CD14-positive monocyte (primary cell): ENCODE measurements at regions of chr5 and their contacts with region 1.

Region 1: DNA sequence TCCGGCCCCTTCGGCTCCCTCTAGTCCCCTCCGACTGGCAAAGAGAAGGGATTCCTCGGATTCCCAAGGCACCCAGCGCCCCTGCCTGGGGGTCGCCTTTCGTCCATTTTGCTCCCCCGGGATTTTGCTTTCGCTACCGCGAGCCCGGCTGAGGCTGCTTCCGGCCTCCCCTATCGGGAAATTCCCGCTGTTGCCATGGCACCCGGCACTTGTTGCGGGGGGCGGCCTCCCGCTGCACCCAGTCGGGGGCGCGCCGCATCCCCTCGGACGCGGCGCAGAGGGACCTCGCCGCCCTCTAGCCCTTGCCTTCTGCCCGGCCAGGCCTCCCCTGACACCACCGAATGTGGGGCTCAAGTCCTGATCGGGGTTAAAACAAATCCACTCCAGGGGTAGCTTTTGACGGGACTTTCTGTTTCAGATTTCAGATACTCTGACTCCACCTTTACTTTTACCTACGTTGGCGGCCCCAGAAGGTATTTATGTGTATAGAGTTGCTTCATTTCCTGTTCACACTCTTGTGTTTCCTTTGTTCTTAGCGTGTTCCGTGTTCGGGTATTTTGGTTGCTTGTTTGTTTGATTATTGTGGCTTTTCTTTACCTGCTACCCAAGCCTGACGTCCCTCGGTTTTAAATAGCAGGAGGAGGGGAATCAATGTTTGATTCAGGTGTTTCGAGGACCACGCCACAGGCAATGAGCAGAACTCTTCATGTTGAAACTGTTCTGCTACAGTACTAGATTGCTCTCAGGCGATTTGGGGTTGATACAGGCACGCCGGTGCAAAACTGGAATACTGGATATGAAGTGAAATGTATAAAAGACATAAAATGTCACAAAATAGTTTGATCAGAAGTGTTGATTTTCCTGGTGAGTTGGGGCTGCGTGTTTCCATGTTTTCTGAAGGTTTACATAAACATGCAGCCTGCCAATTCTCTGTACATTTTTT is 1.5 kb downstream of the PARP8 start:
- DNase-seq: peak; percentile 66 to 80 (median 70)
- H3K4me3 ChIP-seq: peak overlapping the region; percentile 84 to 92 (median 88)
- H3K4me3 Mint-ChIP-seq: peak overlapping the region; percentile 93 to 98
- H3K27ac ChIP-seq: peak overlapping the region; percentile 95 to 98
- H3K27ac Mint-ChIP-seq: peak overlapping the region; percentile 97 to 99 (median 98)
- H3K4me1 ChIP-seq: peaks cover 57 to 71% of the 10 kb centered on the region in 2 donors
- H3K4me1 Mint-ChIP-seq: peaks cover 71% of the 10 kb centered on the region
- H3K27me3 ChIP-seq: no peaks in the 10 kb centered on the region
- H3K27me3 Mint-ChIP-seq: no peaks in the 10 kb centered on the region
- CTCF ChIP-seq: no peak

Region 2: DNA sequence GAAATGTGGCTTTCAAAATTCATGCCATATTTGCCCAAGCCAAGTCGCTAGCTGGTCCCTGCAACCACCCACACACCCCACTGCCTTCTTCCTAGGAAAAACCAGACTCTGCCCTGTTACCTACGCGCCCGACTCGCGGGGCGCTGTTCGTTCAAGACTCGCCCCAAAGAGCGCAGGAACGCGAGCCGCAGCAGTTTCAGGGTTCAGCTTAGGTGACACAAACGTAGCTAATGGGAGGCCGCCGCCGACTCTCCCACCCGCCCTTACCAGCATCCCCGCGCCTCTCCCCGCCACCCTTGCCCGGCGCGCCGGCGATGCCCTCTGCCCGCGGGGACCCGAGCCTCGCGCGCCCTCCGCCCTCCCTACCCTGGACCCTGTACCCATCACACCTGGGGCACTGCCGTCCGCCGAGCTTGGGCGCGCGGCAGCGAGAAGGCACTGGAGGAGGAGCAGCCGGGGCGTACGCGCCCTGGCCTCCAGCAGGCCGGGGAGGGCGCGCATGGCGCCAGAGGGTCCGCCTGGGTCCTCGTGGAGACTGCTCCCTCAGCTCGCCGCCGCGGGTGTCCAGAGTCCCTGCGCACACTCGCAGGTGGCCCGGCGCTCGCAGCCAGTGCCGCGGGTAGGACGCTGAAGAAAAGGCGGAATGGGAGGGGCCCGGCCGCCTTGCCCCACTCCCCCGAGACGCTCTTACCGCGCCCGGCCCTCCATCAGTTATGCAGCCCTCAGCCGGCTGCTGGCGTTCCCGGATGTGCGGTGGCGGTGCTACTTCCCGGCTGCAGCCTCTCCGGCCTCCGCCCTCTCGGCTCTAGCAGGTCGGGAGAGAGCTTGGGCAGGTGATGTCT is 227.1 kb before region 1 on chr5 and contains the start of gene EMB:
- intact Hi-C with region 1: loop called in 1 of 2 experiments (anchors 10 kb)
- DNase-seq: peak; percentile 56 to 72 (median 68)
- H3K4me3 ChIP-seq: peak within 1 kb of the TSS; percentile 73 to 77 (median 77)
- H3K4me3 Mint-ChIP-seq: peak within 1 kb of the TSS; percentile 90 to 91
- H3K27ac ChIP-seq: peak within 1 kb of the TSS; percentile 77 to 89
- H3K27ac Mint-ChIP-seq: peak within 1 kb of the TSS; percentile 87 to 95 (median 90)
- H3K4me1 ChIP-seq: peaks cover 60 to 70% of the 10 kb centered on the region in 2 donors
- H3K4me1 Mint-ChIP-seq: peaks cover 79% of the 10 kb centered on the region
- H3K27me3 ChIP-seq: no peaks in the 10 kb centered on the region
- H3K27me3 Mint-ChIP-seq: no peaks in the 10 kb centered on the region
- CTCF ChIP-seq: peak; percentile 47
- polyA plus RNA-seq, gene EMB: 51.9 to 191 (median 131) TPM

Region 3: GRCh38 chr5:50724262-50724661 is 56.3 kb after region 1 on chr5:
- intact Hi-C with region 1: loop called in 1 of 2 experiments (anchors 5 kb)
- DNase-seq: peak in 1 of 3 donors; percentile 18
- H3K4me3 ChIP-seq: no peak overlapping the region
- H3K4me3 Mint-ChIP-seq: no peak overlapping the region
- H3K27ac ChIP-seq: peak overlapping the region in 1 of 2 donors; percentile 29
- H3K27ac Mint-ChIP-seq: peak overlapping the region in 1 of 7 donors; percentile 15
- H3K4me1 ChIP-seq: peaks cover 0 to 25% of the 10 kb centered on the region in 2 donors
- H3K4me1 Mint-ChIP-seq: peaks cover 41% of the 10 kb centered on the region
- H3K27me3 ChIP-seq: no peaks in the 10 kb centered on the region
- H3K27me3 Mint-ChIP-seq: no peaks in the 10 kb centered on the region
- CTCF ChIP-seq: no peak

Region 4: GRCh38 chr5:50744776-50745175 is 76.9 kb after region 1 on chr5:
- intact Hi-C with region 1: loop called in 1 of 2 experiments (anchors 5 kb)
- DNase-seq: no peak
- H3K4me3 ChIP-seq: peak overlapping the region; percentile 9 to 67 (median 59)
- H3K4me3 Mint-ChIP-seq: peak overlapping the region; percentile 65 to 88
- H3K27ac ChIP-seq: peak overlapping the region in 1 of 2 donors; percentile 80
- H3K27ac Mint-ChIP-seq: peak overlapping the region; percentile 33 to 85 (median 63)
- H3K4me1 ChIP-seq: peaks cover 9 to 24% of the 10 kb centered on the region in 2 donors
- H3K4me1 Mint-ChIP-seq: peaks cover 54% of the 10 kb centered on the region
- H3K27me3 ChIP-seq: no peaks in the 10 kb centered on the region
- H3K27me3 Mint-ChIP-seq: peaks cover 0 to 1% (median 0%) of the 10 kb centered on the region in 3 donors
- CTCF ChIP-seq: no peak